ENCODE measurements at regions of chr1 and their contacts with region 1.

Region 1: DNA sequence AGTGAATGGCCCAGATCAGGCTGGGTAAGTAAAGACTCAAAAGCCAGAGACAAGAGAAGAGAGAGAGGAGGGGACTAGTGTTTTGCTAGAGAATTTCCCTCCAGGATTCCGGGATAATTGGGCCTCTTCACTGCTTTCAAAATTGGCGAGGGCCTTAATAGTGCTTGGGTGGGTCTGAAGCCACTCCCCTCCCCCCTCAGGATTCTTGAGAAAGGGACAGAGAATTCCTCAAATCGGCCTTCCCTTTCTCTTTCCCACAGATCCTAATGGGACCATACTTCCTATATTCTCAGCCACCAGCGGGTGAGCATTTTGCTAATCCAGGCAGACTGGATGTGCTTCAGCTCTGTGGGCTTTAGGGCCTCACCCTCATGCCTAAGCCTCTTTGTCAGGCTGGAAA is 11.9 kb downstream of the SFN start:
- DNase-seq: no peak

Region 2: DNA sequence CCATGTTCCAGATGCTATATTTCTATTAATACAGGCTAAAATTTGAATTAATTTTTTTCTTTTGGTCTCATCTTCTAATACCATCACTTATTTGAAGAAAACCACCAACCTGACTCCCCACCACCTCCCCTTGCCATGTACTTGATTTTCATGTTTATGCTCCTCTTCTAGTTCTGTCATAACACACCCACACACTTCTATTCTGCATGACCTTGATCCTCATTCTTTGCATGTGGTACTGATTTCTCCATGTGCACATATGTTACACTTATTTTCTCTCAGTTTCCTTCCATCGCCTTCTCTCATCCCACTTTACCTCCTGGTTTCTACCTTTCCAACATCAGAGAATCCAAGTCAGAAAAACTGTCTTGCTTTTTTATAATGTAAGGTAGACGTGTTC is 258.0 kb before region 1 on chr1:
- intact Hi-C with region 1: loop called in 1 of 2 experiments (anchors 1 kb)
- DNase-seq: no peak

Region 3: DNA sequence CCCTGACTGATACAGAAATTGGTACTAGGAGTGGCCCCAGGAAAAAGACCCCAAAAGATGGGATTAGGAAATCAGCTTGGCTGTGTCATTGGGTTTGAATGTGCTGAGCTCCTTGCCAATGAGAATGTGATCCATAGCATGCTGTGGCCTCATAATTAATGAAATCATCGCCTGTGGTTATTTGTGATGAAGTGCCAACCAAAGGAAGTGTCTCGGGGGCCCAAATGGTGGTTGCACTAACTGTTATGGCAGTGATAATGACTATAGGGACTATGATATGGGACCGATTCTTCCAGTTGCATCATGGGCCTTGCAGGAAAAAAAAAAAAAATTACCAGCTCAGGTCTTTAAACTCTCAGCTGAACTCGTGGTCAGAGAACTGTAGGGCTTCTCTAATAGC is 63.8 kb before region 1 on chr1:
- intact Hi-C with region 1: loop called in 1 of 2 experiments (anchors 10 kb)
- DNase-seq: no peak

Region 4: DNA sequence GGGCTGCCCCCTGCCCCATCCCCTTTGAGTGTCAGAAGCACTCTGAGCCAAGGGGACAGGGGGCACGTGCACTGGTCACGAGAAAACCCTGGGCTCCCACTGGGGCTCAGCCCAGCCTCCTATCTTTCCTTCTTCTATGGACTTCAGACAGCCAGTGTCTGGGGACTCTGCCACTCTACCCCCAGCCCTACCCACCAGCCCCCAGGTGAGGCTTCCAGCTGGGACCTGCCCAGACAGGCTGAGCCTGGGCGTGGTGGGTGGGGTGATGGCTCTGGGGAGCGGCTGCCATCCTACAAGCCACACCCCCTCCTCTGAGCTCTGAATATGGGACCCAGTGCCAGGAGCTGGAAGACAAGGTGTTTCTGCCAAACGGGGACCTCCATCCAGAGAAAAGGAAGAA is 20.0 kb before region 1 on chr1:
- intact Hi-C with region 1: loop called in 1 of 2 experiments (anchors 2 kb)
- DNase-seq: no peak

Region 5: GRCh38 chr1:26889551-26890466 is 14.9 kb after region 1 on chr1 and contains the start of gene GPN2:
- intact Hi-C with region 1: no loop called
- DNase-seq: peak; percentile 93
- total RNA-seq, gene GPN2: 17.7 to 19.4 TPM

Region 6: DNA sequence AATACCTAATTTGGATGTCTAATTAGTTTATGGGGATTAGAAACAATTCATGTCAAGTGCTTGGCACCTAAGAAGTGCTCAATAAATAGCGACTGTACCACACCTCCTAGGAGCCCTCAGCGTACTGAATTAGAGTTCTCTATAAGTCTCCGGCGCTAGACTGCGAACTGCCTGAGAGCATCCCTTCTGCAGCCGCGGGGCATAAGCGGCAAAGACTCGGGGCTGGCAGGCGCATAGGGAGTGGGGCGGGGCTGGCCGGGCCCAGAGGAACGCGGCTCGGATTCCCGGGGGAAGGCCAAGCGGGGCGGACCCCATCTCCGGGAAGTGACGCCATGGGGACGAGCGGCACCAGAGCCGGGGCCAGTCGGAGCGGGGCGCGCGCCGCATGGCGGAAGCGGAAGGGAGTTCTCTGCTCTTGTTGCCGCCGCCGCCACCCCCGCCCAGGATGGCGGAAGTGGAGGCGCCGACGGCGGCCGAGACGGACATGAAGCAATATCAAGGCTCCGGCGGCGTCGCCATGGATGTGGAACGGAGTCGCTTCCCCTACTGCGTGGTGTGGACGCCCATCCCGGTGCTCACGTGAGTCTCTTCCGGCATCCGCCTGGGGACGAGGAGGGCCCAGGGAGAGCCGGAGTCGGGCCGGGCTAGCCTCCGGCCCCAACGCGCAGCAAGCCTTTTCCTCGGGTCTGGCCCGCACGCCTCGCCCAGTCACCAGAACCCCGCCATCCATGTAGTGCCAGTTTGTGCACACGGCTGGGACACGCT is 447.1 kb after region 1 on chr1 and contains the start of gene TMEM222:
- intact Hi-C with region 1: no loop called
- DNase-seq: peak; percentile 100
- total RNA-seq, gene TMEM222: 25.0 to 26.7 TPM